ENCODE measurements at regions of chr6 and their contacts with region 1.

Region 1: DNA sequence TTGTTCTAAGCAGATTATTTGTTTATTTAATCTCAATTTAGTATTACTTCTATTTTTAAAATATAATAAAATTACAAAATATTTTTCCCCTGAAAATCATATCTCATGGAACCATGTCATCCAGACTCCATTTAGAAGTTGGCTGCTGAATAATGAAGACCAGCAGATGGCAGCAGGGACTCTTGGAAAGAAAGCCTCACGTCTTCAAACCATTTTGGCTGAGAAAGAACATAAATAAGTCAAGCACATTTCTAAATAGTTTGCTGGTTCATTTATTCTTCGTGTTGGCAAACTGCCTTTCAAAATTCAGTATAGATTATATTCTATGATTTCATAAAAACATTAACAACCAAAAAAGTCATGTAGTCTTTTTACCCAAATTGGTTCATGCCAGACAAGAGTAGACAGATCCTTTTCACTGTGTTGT is 71.7 kb downstream of the RCAN2 start:
- DNase-seq: no peak
- H3K4me3 ChIP-seq: no peak overlapping the region
- H3K27ac ChIP-seq: peak overlapping the region; percentile 64
- H3K4me1 ChIP-seq: peaks cover 61% of the 10 kb centered on the region
- H3K27me3 ChIP-seq: no peaks in the 10 kb centered on the region
- CTCF ChIP-seq: peak; percentile 87

Region 2: GRCh38 chr6:46491628-46492547 is 72.3 kb after region 1 on chr6:
- intact Hi-C with region 1: loop called (anchors 5 kb)
- DNase-seq: peak; percentile 57
- H3K4me3 ChIP-seq: peak overlapping the region; percentile 72
- H3K27ac ChIP-seq: peak overlapping the region; percentile 94
- H3K4me1 ChIP-seq: peaks cover 48% of the 10 kb centered on the region
- H3K27me3 ChIP-seq: peaks cover 27% of the 10 kb centered on the region
- CTCF ChIP-seq: peak; percentile 80

Region 3: DNA sequence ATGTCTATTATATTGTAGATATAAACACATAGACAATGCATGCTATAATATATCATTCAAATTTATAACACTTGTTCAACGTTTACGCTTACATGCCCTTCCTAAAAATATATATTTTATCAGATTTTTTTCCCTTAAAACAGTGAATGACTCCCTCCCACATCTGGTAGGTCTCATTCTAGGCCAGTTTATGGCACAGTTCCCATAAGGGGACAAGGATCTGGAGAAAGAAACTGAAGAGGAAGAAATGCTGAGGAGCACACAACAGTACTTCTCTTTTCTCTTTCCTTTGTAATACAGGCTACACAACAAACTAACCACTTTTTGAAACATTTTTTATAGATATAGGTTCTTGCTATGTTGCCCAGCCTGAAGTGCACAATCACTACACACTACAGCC is 120.3 kb after region 1 on chr6:
- intact Hi-C with region 1: no loop called
- DNase-seq: no peak
- H3K4me3 ChIP-seq: no peak overlapping the region
- H3K27ac ChIP-seq: no peak overlapping the region
- H3K4me1 ChIP-seq: no peaks in the 10 kb centered on the region
- H3K27me3 ChIP-seq: no peaks in the 10 kb centered on the region
- CTCF ChIP-seq: no peak

Region 4: DNA sequence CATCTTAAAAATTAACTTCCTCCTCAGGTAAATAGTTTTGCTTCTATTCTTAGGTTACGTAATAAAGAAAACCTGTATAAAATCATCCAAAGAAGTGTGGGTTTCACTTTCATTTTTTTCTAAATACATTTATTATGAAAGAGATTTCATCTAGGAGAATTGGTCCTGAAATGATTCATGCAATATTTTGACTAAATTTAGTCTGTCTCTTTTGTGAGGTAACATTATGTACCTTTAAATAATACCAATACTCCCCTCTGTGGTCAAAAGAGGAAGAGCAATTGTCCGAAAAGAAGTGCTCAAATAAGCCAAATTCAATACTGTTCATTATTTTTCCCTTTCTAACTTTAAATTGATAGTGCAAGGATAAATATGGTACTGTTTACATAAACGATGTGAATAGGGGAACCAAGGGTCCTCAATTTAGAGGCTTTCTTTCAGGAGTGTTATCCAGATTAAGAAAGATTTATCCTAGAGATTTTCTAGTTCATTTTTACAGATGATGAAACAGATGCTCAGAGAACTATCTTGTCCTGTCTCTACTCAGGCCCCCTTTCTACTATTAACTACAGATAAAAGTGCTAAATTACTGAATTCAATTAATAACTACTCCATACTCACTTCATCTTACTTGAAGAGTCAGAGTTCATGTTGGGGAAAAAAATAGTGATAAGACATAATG is 206.8 kb after region 1 on chr6:
- intact Hi-C with region 1: loop called (anchors 5 kb)
- DNase-seq: no peak
- H3K4me3 ChIP-seq: no peak overlapping the region
- H3K27ac ChIP-seq: peak overlapping the region; percentile 1
- H3K4me1 ChIP-seq: peaks cover 18% of the 10 kb centered on the region
- H3K27me3 ChIP-seq: no peaks in the 10 kb centered on the region
- CTCF ChIP-seq: peak; percentile 75